Right cardiac atrium (tissue), 5 donors: ENCODE measurements at regions of chr12 and their contacts with region 1.

Region 1: GRCh38 chr12:59595883-59596540 is at the start of gene SLC16A7:
- DNase-seq: peak; percentile 94 to 96 (median 96)
- ATAC-seq: peak; percentile 93 to 95
- H3K4me3 ChIP-seq: peak within 1 kb of the TSS; percentile 52
- H3K27ac ChIP-seq: peak within 1 kb of the TSS; percentile 98
- H3K4me1 ChIP-seq: no peaks in the 10 kb centered on the region
- H3K27me3 ChIP-seq: no peaks in the 10 kb centered on the region
- total RNA-seq, gene SLC16A7: 64.3 to 109 (median 84.7) TPM

Region 2: GRCh38 chr12:59776482-59776881 is 180.5 kb after region 1 on chr12:
- intact Hi-C with region 1: loop called in 1 of 4 experiments (anchors 10 kb)
- DNase-seq: no peak
- ATAC-seq: no peak
- H3K4me3 ChIP-seq: no peak overlapping the region
- H3K27ac ChIP-seq: no peak overlapping the region
- H3K4me1 ChIP-seq: no peaks in the 10 kb centered on the region
- H3K27me3 ChIP-seq: no peaks in the 10 kb centered on the region

Region 3: DNA sequence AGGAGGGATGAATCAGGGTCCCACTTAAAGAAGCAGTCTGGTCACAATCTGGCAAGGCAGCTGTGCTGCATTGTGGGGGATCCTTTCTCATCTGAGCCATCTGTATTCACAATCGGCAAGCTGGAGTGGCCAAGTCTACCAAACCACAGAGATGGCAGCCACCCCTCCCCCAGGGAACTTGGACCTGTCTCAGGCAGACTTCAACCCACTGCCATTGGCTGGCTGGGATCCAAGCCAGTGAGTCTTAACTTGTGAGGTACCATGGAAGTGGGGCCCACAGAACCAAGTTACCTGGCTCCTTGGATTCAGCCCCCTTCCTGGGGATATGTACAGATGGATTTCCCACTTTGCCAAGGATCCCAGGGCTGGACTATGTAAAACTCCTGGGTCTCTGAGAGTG is 196.6 kb after region 1 on chr12:
- intact Hi-C with region 1: loop called in 1 of 4 experiments (anchors 10 kb)
- DNase-seq: peak in 1 of 3 donors; percentile 39
- ATAC-seq: peak in 1 of 2 donors; percentile 38
- H3K4me3 ChIP-seq: no peak overlapping the region
- H3K27ac ChIP-seq: no peak overlapping the region
- H3K4me1 ChIP-seq: no peaks in the 10 kb centered on the region
- H3K27me3 ChIP-seq: no peaks in the 10 kb centered on the region

Region 4: DNA sequence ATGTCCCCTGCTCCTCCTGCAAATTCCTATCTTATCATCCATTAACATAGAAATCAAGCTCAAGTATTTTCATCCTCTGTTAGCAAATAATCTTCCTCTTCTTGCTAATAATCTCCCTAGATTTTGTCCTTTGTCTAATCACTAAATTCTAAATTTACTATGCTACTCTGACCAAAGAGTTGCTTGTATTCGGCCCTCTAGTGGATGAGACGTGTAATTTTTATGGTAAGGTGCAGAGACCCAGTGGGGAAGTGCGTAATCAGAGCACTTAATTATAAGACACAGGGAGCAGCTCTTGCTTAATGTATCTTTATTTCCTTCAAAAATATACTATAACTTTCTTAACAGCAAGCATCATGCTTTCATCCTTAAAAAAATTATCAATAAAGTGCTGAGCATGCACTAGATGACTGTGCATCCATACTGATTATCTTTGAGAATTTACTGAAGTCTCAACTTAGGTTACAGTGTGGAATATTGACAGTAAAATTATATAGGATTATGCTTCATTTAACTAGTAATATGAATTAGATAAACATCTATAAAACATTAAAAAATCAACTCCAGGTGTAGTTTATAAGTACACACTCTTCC is 212.4 kb after region 1 on chr12:
- intact Hi-C with region 1: loop called in 1 of 4 experiments (anchors 10 kb)
- DNase-seq: no peak
- ATAC-seq: peak; percentile 67 to 76
- H3K4me3 ChIP-seq: no peak overlapping the region
- H3K27ac ChIP-seq: no peak overlapping the region
- H3K4me1 ChIP-seq: no peaks in the 10 kb centered on the region
- H3K27me3 ChIP-seq: no peaks in the 10 kb centered on the region

Region 5: GRCh38 chr12:60849723-60850122 is 1253.7 kb after region 1 on chr12:
- intact Hi-C with region 1: no loop called
- DNase-seq: no peak
- ATAC-seq: no peak
- H3K4me3 ChIP-seq: no peak overlapping the region
- H3K27ac ChIP-seq: no peak overlapping the region
- H3K4me1 ChIP-seq: no peaks in the 10 kb centered on the region
- H3K27me3 ChIP-seq: no peaks in the 10 kb centered on the region